Endothelial cell of umbilical vein (primary cell): ENCODE measurements at regions of chr10 and their contacts with region 1.

Region 1: DNA sequence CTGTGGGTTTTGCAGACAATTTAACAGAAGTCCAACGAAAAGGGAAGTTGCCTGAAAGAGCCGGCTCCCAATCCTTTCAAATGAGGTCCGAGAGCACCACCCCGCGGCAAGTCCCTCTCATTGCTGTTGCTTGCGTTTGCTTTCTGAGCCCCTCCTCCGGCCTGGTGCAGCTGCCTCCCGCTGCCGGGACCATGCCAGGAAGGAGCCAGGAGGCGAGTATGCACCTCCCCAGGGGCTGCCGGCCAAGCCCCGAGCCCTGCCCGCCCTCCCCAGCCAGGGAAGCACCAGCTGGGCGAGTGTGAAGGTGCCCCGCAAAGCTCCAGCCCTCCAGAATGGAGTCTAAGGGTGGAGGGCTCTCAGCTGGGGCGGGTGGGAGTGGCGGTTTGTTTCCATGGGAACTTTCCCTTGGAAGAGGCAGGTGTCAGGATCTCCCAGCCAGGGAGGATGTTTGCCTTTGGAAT is 25.8 kb upstream of the PPP2R2D start:
- DNase-seq: peak; percentile 74
- H3K4me3 ChIP-seq: no peak overlapping the region
- H3K27ac ChIP-seq: no peak overlapping the region
- H3K4me1 ChIP-seq: no peaks in the 10 kb centered on the region
- H3K27me3 ChIP-seq: no peaks in the 10 kb centered on the region
- CTCF ChIP-seq: peak; percentile 72 to 85
- POLR2A ChIP-seq: no peak

Region 2: GRCh38 chr10:131453594-131454355 is 421.2 kb before region 1 on chr10:
- CTCF ChIA-PET with region 1: no interaction called
- POLR2A ChIA-PET with region 1: no interaction called
- dilution Hi-C with region 1: no loop called
- intact Hi-C with region 1: loop called (anchors 10 kb)
- DNase-seq: no peak
- H3K4me3 ChIP-seq: no peak overlapping the region
- H3K27ac ChIP-seq: no peak overlapping the region
- H3K4me1 ChIP-seq: no peaks in the 10 kb centered on the region
- H3K27me3 ChIP-seq: no peaks in the 10 kb centered on the region
- CTCF ChIP-seq: peak in 1 of 2 donors; percentile 33
- POLR2A ChIP-seq: no peak

Region 3: DNA sequence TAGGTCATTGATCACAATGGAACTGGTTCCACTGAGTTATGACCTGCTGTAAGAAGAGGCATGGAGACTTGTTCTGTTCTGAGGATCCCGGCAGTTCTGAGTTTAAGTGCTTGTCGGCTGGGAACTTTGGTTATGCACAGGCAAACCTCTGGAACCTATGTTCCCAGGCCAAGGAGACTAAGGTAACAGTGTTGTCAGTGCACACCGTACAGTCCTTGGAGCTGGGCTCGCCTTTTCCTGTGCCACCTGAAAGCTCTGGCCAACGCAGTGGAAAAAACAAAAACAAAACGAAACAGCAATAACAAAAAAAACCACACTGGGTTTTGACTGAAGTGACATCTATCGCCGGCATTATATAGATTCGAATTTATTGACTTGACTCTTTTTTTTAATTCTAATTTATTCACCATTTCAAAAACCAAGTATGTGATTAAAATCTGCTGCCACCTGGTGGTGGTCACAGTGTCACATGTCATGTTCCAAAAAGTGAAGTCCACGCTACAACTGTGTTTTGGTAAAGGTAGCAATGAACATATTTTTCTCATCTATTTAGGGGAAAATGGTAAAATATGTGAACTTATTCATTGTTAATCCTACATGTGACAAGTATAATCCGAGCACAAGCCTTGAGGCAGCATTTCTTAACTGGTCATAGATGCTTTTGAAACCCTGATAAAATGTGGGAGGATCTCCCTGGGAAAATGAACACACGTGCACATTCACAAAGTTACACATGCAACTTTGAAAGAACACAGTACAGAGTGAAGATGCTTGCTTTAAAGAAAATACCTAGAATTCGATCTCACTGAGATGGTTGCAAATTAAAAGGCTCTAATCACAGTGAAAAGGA is 88.0 kb before region 1 on chr10:
- CTCF ChIA-PET with region 1: no interaction called
- POLR2A ChIA-PET with region 1: no interaction called
- dilution Hi-C with region 1: no loop called
- intact Hi-C with region 1: loop called (anchors 1 kb)
- DNase-seq: peak; percentile 12
- H3K4me3 ChIP-seq: no peak overlapping the region
- H3K27ac ChIP-seq: no peak overlapping the region
- H3K4me1 ChIP-seq: no peaks in the 10 kb centered on the region
- H3K27me3 ChIP-seq: no peaks in the 10 kb centered on the region
- CTCF ChIP-seq: peak; percentile 17 to 33
- POLR2A ChIP-seq: no peak

Region 4: GRCh38 chr10:131961777-131962662 is 87.0 kb after region 1 on chr10:
- CTCF ChIA-PET with region 1: no interaction called
- POLR2A ChIA-PET with region 1: no interaction called
- dilution Hi-C with region 1: no loop called
- intact Hi-C with region 1: no loop called
- DNase-seq: no peak
- H3K4me3 ChIP-seq: no peak overlapping the region
- H3K27ac ChIP-seq: no peak overlapping the region
- H3K4me1 ChIP-seq: no peaks in the 10 kb centered on the region
- H3K27me3 ChIP-seq: no peaks in the 10 kb centered on the region
- CTCF ChIP-seq: no peak
- POLR2A ChIP-seq: no peak